GM12878 (cell line): ENCODE measurements at regions of chr10 and their contacts with region 1.

Region 1: DNA sequence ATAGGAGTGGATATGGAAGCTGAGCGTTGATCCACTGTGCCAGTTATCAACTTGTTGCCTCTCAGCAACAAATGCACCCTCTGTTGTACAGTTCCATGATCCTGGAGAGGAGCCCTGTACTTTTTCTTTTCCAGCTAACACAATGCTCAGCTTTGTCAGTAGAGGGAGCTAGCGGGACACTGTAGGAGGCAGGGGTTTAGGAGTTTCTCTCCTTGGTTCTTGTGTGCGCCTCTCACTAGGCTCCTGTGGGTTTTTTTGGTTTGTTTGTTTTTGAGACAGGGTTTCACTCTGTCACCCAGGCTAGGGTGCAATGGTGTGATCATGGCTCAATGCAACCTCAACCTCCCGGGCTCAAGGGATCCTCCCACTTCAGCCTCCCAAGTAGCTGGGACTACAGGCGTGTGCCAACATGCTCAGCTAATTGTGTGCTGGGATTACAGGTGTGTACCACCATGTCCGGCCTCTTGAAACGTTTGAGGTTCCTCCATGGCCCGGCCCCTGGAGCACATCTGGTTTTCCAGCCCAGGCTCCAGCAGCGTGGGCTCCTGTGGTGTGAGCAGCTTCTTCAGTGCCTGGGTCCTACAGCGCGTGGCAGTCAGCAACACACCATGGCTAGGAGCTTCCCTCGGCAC is 12.0 kb upstream of the MARVELD1 start:
- DNase-seq: no peak
- ATAC-seq: peak; percentile 96
- H3K4me3 ChIP-seq: no peak overlapping the region
- H3K27ac ChIP-seq: no peak overlapping the region
- H3K4me1 ChIP-seq: 0 out of 2 replicates have a peak, but pooled peaks cover 3% of the 10 kb centered on the region
- H3K27me3 ChIP-seq: no peaks in the 10 kb centered on the region; a peak in 2 of 4 replicates
- CTCF ChIP-seq: peak; percentile 87 to 91 (median 89)
- EP300 ChIP-seq: no peak
- POLR2A ChIP-seq: no peak
- RAD21 ChIP-seq: peak; percentile 89

Region 2: GRCh38 chr10:97676770-97677581 is 24.6 kb before region 1 on chr10:
- CTCF ChIA-PET with region 1: interaction called, 115 read pairs
- POLR2A ChIA-PET with region 1: interaction called, 3 read pairs
- RAD21 ChIA-PET with region 1: interaction called, 4 read pairs
- SMC1A ChIA-PET with region 1: interaction called, 38 read pairs
- in situ Hi-C with region 1: no loop called
- intact Hi-C with region 1: no loop called
- DNase-seq: no peak
- ATAC-seq: peak; percentile 95
- H3K4me3 ChIP-seq: no peak overlapping the region
- H3K27ac ChIP-seq: 0 out of 2 replicates have a peak overlapping the region, but pooled peaks have one; percentile 6
- H3K4me1 ChIP-seq: peaks cover 12% of the 10 kb centered on the region
- H3K27me3 ChIP-seq: no peaks in the 10 kb centered on the region
- CTCF ChIP-seq: peak; percentile 76 to 80 (median 78)
- EP300 ChIP-seq: no peak
- POLR2A ChIP-seq: peak; percentile 20; the same call in 1 of the 2 replicates
- RAD21 ChIP-seq: peak; percentile 81

Region 3: GRCh38 chr10:97714048-97714371 is 12.5 kb after region 1 on chr10:
- CTCF ChIA-PET with region 1: interaction called, 416 read pairs
- POLR2A ChIA-PET with region 1: no interaction called
- RAD21 ChIA-PET with region 1: interaction called, 6 read pairs
- SMC1A ChIA-PET with region 1: interaction called, 4 read pairs
- in situ Hi-C with region 1: no loop called
- intact Hi-C with region 1: no loop called
- DNase-seq: no peak
- ATAC-seq: peak; percentile 87
- H3K4me3 ChIP-seq: peak overlapping the region; percentile 74
- H3K27ac ChIP-seq: no peak overlapping the region
- H3K4me1 ChIP-seq: peaks cover 3% of the 10 kb centered on the region; the same call in 1 of the 2 replicates
- H3K27me3 ChIP-seq: peaks cover 0 to 2% of the 10 kb centered on the region in 2 experiments; a peak in 1 of 4 replicates
- CTCF ChIP-seq: peak; percentile 13 to 42 (median 28); a peak in 3 of 6 replicates
- EP300 ChIP-seq: no peak
- POLR2A ChIP-seq: peak; percentile 87
- RAD21 ChIP-seq: no peak

Region 4: GRCh38 chr10:97736902-97737769 is 35.6 kb after region 1 on chr10 and contains the start of gene ZFYVE27:
- CTCF ChIA-PET with region 1: interaction called, 416 read pairs
- POLR2A ChIA-PET with region 1: interaction called, 6 read pairs
- RAD21 ChIA-PET with region 1: interaction called, 12 read pairs
- SMC1A ChIA-PET with region 1: interaction called, 28 read pairs
- in situ Hi-C with region 1: no loop called
- intact Hi-C with region 1: no loop called
- DNase-seq: peak; percentile 85
- ATAC-seq: peak; percentile 90
- H3K4me3 ChIP-seq: peak within 1 kb of the TSS; percentile 91
- H3K27ac ChIP-seq: peak within 1 kb of the TSS; percentile 91
- H3K4me1 ChIP-seq: peaks cover 10% of the 10 kb centered on the region
- H3K27me3 ChIP-seq: no peaks in the 10 kb centered on the region
- CTCF ChIP-seq: no peak
- EP300 ChIP-seq: 0 out of 4 replicates have a peak, but pooled peaks of 1 of the 2 experiments have one; percentile 8
- POLR2A ChIP-seq: peak; percentile 98
- RAD21 ChIP-seq: no peak
- polyA plus RNA-seq, gene ZFYVE27: 1.1 to 1.3 TPM